Breast epithelium (tissue), 4 donors: ENCODE measurements at regions of chr17 and their contacts with region 1.

Region 1: DNA sequence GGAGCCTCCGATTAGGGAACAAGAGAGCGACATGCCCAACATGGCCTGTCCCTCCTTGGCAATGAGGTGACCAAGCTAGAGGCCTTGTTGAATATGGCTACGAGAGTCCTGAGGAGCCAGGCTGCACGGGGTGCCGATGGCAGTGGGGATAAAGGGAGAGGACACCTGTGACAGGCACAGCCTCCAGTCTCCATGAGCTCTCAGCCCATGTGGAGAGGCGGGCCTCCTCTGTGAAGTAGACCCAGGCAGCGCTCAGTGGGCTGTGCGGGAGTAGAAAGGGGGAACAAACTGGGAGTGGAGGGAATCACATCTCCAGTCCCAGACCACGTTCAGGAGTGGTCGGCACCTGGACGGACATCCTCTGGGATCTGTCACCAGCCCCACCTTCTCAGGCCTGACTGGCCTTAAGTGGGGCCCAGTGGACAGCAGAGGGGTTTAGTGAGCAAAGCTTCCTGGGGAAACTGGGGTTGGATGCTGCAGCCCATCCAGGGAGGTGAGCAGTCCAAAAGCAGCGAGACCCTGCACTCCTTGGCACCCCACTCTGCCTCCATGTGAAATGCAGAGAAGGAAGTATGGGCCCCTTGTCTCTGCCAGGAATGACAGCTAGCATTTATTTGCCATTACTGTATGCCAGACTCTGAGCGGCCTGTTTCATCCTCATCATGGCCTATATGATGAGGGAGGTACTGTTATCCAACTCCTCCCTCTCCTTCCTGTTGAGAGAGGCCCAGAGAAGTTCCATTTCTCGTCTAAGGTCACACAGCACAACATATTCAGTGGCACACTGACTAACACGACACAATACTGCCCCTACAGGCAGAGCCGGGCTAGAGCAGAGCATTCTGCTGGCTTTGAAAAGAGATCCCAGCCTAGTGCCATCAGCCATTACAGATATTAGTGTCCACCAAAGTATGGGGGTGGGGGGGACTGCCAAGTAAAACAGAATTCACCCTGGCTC is 4.5 kb upstream of the TMEM92 start:
- DNase-seq: peak in 1 of 2 donors; percentile 61
- H3K4me3 ChIP-seq: no peak overlapping the region
- H3K27ac ChIP-seq: peak overlapping the region; percentile 57 to 87
- H3K4me1 ChIP-seq: peaks cover 9 to 23% of the 10 kb centered on the region in 2 donors
- H3K27me3 ChIP-seq: no peaks in the 10 kb centered on the region
- CTCF ChIP-seq: peak; percentile 30 to 72 (median 64)
- POLR2A ChIP-seq: no peak

Region 2: GRCh38 chr17:49456183-49456965 is 813.4 kb before region 1 on chr17:
- intact Hi-C with region 1: no loop called
- DNase-seq: no peak
- H3K4me3 ChIP-seq: no peak overlapping the region
- H3K27ac ChIP-seq: no peak overlapping the region
- H3K4me1 ChIP-seq: peaks cover 0 to 12% of the 10 kb centered on the region in 2 donors
- H3K27me3 ChIP-seq: peaks cover 0 to 8% of the 10 kb centered on the region in 2 donors
- CTCF ChIP-seq: no peak
- POLR2A ChIP-seq: no peak

Region 3: GRCh38 chr17:50101346-50102163 is 168.2 kb before region 1 on chr17:
- intact Hi-C with region 1: no loop called
- DNase-seq: no peak
- H3K4me3 ChIP-seq: peak overlapping the region in 1 of 3 donors; percentile 9
- H3K27ac ChIP-seq: peak overlapping the region in 1 of 2 donors; percentile 59
- H3K4me1 ChIP-seq: peaks cover 0 to 2% of the 10 kb centered on the region in 2 donors
- H3K27me3 ChIP-seq: no peaks in the 10 kb centered on the region
- CTCF ChIP-seq: no peak
- POLR2A ChIP-seq: no peak

Region 4: DNA sequence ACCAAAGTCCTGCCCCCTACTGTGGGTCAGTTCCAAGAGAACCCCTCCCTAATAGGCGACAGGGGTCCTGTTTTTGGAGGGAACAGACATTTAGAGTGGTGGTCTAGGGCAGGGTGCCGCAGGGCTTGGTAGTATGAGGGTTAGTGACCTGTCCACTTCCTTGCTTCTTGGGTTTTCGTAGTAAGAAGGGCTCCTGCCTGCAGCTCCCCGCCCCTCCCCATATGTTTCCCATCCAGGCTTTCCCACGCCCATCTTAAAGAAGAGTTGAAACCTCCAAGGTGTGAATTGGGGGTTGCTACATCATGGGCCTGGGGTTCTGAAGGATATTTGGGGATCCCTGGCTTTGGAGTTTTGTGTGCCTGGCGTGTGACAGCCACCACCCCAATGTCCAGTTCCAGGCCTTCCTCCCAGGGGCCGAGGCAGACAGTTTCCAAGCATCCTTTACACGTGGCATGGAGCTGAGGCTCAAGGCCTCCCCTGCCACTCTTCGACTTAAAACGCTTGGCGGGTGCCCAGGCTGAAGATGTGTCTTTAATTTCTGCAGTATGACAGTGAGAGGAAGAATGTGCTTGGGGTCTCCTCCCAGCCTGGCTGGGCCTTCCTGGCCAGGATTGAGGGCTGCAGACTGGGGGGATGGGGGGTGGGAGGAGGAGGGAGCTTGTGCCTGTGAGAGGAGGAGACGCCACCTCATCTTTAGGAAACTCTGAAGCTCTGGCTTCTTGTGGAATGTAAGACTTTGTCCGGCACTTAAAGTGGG is 66.0 kb before region 1 on chr17:
- intact Hi-C with region 1: loop called (anchors 2 kb)
- DNase-seq: no peak
- H3K4me3 ChIP-seq: no peak overlapping the region
- H3K27ac ChIP-seq: peak overlapping the region; percentile 52 to 93
- H3K4me1 ChIP-seq: peaks cover 0 to 1% of the 10 kb centered on the region in 2 donors
- H3K27me3 ChIP-seq: peaks cover 0 to 14% of the 10 kb centered on the region in 2 donors
- CTCF ChIP-seq: no peak
- POLR2A ChIP-seq: no peak

Region 5: GRCh38 chr17:50221864-50222545 is 47.8 kb before region 1 on chr17:
- intact Hi-C with region 1: loop called (anchors 2 kb)
- DNase-seq: peak in 1 of 2 donors; percentile 82
- H3K4me3 ChIP-seq: no peak overlapping the region
- H3K27ac ChIP-seq: peak overlapping the region; percentile 86 to 95
- H3K4me1 ChIP-seq: peaks cover 0 to 9% of the 10 kb centered on the region in 2 donors
- H3K27me3 ChIP-seq: no peaks in the 10 kb centered on the region
- CTCF ChIP-seq: no peak
- POLR2A ChIP-seq: no peak

Region 6: GRCh38 chr17:50765454-50766221 is 495.9 kb after region 1 on chr17:
- intact Hi-C with region 1: no loop called
- DNase-seq: no peak
- H3K4me3 ChIP-seq: no peak overlapping the region
- H3K27ac ChIP-seq: no peak overlapping the region
- H3K4me1 ChIP-seq: no peaks in the 10 kb centered on the region
- H3K27me3 ChIP-seq: no peaks in the 10 kb centered on the region
- CTCF ChIP-seq: no peak
- POLR2A ChIP-seq: no peak